ENCODE measurements at regions of chr11 and their contacts with region 1.

Region 1: DNA sequence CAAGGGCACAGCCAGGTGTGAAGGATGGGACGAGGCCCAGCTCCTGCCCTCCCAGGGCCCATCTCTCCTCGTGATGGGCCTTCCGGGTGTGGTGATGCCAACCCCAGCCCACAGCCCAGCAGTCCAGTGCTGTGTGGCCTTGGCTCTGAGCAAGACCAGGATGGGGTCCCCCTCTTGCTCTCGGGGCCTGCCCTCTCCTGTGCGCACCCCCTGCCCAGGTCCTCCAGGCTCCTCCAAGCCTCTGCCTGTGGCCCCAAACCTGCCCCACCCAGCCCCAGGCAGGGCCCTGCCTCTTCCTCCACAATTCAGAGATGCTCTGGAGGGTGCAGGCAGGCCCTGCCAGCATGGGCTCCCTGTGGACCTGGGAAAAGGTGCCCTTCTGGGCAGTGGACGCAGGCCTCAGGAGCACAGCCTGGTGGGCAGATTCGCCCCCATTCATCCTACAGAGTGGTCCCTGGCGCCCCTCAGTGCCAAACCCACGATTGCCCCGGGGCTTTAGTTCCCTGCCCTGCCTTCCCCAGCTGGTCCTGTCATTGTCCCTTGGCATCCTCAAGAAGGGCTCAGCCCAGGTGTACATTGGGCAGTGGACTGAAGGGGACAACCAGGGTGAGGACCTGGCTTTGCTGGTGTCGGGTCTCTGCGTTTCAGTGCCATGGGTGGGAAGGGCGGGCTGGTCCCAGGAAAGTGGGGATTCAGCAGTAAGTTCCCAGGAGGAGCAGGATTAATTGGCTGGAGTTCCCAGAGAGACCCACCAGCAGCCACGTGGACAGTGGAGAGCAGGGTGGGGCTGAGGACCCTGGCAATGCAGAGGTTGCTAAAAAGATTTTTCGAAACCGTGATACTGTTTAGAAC is 19.8 kb downstream of the EIF1AD start:
- DNase-seq: no peak
- H3K4me3 ChIP-seq: no peak overlapping the region
- H3K27ac ChIP-seq: no peak overlapping the region
- H3K4me1 ChIP-seq: no peaks in the 10 kb centered on the region
- H3K27me3 ChIP-seq: no peaks in the 10 kb centered on the region
- CTCF ChIP-seq: no peak
- EP300 ChIP-seq: no peak
- POLR2A ChIP-seq: no peak

Region 2: GRCh38 chr11:64192434-64192833 is 1789.8 kb before region 1 on chr11:
- in situ Hi-C with region 1: no loop called
- intact Hi-C with region 1: loop called (anchors 5 kb)
- DNase-seq: no peak
- H3K4me3 ChIP-seq: no peak overlapping the region
- H3K27ac ChIP-seq: no peak overlapping the region
- H3K4me1 ChIP-seq: peaks cover 0 to 11% (median 4%) of the 10 kb centered on the region in 4 donors
- H3K27me3 ChIP-seq: no peaks in the 10 kb centered on the region
- CTCF ChIP-seq: no peak
- EP300 ChIP-seq: no peak
- POLR2A ChIP-seq: no peak